HAP-1 (cell line): ENCODE measurements at regions of chr3 and their contacts with region 1.

Region 1: DNA sequence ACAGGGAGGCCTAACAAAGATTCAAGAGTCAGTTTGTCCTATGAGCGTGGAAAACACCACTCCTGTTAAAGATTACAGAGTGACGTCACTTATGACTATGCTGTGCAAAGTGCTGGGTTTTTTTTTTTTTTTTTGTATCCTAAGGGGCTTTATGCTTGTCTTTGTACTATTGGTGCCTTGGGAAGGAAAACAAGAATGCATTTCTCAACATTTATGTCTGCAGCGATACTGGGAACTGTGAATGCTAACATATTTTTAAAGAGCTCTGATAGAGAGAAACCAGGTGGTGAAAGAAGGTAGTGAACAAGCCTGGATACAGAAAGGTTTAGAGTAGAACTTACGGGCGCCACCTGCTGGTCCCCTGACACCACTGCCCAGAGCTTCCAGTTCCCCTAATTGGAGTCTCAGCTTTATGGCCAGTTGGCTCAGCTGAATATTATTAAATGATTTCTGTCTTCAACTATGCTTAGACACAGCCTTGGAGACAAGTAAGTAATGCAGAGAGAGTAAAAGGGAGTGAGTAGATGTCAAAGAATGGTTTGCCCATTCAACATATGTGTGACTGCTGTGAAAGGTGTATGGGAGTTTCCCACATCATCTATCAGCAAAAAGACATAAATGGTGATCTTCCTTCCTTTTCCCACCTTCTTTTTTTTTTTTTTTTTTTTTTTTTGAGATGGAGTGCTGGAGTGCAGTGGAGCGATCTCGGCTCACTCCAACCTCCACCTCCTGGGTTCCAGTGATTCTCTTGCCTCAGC is 807.9 kb upstream of the CFAP20DC start:
- DNase-seq: peak; percentile 81 to 87
- H3K4me3 ChIP-seq: no peak overlapping the region
- H3K4me1 ChIP-seq: peaks cover 12% of the 10 kb centered on the region
- H3K27me3 ChIP-seq: no peaks in the 10 kb centered on the region

Region 2: DNA sequence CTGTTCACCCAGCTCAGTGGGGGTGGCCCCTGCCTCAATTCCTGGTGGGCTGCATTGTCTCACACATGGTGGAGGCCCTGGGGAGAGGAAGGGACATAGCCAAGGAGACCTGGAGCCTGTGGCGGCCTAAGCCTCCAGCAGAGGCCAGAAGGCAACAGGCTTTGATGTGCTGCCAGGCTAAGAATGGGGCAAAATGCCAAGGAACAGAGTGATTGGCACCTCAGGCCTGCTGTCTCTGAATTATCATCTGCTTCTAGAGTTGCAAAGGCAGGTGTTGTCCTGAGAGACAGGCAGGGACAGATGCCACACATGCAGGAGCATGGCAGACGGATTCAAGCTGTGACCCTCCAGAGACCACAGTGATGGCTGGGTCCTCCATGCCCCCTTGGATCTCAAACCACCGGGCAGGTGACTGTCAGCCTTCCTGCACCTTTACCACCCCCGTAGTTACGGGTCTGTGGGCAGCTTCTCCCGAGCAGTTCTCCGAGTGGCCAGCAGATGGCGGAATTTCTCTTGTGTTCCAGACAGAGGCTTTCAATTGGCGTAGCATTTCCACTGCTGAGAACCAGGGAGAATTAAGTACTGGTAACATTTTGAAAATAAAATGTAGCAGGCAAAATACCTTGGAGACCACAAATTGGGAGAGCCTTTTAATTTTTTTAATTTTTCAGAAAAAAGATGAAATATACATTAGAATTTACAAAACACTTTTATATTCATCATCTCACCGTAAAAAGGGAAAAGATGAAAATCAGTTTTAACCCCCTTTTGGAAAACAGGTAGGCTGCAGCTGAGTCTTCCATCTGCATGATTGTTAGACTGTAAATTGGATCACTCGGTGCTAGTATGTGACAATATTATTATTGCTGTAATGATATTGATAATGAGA is 282.4 kb before region 1 on chr3:
- in situ Hi-C with region 1: loop called (anchors 10 kb)
- DNase-seq: peak; percentile 71 to 91
- H3K4me3 ChIP-seq: no peak overlapping the region
- H3K4me1 ChIP-seq: no peaks in the 10 kb centered on the region
- H3K27me3 ChIP-seq: no peaks in the 10 kb centered on the region